Posterior cingulate gyrus (tissue), 11 donors: ENCODE measurements at regions of chr17 and their contacts with region 1.

Region 1: GRCh38 chr17:4420692-4421131 is 13.0 kb upstream of the SPNS3 start:
- DNase-seq: peak in 8 of 10 donors; percentile 20 to 91 (median 66)

Region 2: DNA sequence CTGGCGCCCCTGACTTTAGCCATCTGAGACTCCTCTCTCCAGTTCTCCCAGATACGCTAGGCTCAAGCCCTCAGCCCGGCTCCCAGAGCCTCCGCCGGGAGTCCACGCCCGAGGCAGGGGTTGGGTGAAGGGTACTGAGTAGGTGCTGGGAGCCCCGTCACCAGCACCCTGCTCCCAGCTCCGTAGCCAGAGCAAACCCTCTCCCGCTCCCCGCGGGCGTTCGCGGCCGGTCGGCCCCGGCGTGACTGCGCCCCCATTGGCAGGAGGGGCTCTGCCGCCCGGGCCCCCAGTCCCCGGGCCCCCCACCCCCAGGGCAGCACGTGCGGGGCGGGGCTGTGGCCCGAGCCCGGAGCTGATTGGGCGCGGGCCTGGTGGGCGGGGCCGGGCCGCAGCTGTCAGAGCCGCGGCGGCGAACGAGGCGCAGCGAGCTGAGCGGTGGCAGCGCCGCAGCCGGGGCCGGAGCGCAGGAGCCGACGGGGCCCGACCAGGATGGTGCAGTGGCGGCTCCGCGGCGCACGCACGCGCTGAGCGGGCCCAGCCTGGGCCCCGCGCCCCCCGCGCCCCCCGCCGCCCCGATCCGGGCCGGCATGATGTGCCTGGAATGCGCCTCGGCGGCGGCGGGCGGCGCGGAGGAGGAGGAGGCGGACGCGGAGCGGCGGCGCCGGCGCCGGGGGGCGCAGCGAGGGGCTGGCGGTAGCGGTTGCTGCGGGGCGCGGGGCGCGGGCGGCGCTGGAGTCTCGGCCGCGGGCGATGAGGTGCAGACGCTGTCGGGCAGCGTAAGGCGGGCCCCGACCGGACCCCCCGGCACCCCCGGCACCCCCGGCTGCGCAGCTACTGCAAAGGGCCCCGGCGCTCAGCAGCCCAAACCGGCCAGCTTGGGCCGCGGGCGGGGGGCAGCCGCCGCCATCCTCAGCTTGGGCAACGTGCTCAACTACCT is 78.0 kb after region 1 on chr17 and contains the start of gene SPNS2:
- intact Hi-C with region 1: loop called (anchors 10 kb)
- DNase-seq: peak; percentile 72 to 98 (median 80)

Region 3: GRCh38 chr17:4540224-4540641 is 119.5 kb after region 1 on chr17:
- intact Hi-C with region 1: loop called (anchors 5 kb)
- DNase-seq: peak in 1 of 10 donors; percentile 77

Region 4: DNA sequence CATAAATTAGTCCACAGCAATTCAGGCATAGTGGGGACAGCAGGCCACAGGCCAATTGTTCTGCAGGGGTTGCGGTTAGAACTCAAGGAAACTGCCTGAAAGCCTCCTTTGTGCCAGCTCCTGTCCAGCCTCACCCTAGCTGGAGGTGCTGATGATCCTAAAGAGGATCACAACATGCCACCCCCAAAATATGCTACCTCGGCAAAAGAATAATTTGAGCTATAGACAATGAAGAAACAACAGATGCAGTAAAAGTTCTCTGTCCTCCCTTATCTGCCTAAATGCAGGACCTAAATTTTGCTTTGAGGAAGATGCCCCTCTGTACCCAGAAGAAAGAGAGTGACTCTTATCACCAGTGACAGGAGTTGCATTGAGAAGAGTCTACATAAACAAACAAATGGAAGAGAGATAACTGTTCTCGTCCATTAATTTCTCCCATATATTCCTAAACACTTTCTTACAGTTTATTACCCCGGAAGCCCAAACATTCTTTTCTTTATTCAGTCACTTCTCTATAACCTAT is 206.1 kb after region 1 on chr17:
- intact Hi-C with region 1: loop called (anchors 1 kb)
- DNase-seq: peak in 1 of 10 donors; percentile 11

Region 5: DNA sequence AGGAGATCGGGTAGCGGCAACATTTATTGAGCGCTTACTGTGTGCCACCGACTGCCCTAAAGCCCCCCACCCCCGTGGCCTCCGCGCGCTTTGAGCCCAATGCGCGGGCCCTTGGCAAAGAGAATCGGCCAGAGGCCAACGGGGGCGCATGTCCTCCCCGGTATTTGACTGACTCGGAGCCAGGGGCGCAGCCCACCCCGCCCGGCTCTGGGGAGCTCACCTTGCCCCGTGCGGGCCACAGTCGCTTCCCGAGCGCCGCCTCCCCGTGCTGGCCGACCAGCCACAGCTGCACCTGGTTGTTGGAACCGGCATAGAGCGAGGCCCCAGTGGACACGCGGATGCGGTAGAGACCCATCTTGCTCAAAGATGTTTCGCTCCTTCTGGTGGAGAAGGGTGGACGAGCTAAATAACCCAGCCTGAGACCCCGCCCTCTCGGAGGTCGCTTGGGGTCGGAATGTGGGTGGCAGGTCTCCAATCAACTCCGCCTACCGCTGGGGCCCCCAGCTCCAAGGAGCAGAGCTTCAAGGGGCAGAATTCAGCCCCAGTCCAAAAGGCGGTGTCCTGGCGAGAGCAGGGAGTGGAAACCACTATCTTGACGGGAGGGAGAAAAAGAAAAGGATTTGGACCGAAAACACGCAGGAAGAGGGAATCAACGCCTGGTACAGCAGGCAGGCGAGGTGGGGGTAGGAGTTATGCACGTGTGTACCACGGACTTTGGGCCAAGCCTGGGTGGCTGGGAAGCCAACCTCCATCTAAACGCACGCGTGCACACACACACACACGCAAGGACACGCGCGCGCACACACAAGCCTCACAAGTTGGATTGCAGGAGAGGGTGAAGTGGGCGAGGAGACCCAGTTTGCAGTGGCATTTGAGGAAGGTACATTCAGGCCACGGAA is 220.8 kb after region 1 on chr17 and contains the start of gene ALOX15:
- intact Hi-C with region 1: no loop called
- DNase-seq: peak in 1 of 10 donors; percentile 63